Activated naive CD4-positive, alpha-beta T cell treated with anti-CD3 and anti-CD28 coated beads, Interleukin-2, amount 10 ng/mL, durations not matched to agents 7 days and 5 days (primary cell): ENCODE measurements at regions of chr3 and their contacts with region 1.

Region 1: DNA sequence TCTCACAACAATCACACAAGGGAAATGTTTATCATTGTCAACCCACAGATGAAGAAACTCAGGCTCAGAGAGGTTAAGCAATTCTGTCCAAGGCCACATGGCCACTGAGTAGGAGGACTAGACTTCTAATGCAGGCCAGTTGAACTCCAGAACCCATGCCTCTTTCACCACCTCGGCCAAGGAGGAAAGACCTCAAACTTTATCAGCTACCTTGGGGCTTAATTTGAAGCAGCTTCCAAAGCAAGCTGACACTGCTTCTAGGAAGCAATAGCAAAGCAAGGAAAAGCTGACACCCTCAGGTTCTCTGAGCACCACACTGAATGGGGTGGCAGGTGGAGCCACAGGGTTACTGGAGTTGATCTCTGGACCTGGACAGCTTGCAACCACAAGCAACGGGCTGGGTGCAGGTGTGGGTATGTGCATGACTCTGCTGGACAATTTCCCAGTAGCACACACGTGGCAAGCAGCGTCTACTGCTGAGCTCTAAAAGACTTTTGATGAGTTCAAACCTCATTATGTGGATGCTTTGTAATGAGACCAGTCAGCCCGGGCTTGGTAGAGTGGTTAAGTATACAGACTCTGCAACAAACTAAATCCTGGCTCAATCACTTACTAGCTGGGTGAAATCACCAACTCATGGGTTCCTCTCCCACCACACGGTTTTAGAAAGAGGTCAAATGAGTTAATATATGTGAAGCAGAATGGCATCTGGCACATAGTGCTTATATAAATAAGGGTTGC is 23.1 kb downstream of the CCNL1 start:
- DNase-seq: no peak
- H3K4me3 Mint-ChIP-seq: no peak overlapping the region
- H3K27ac Mint-ChIP-seq: peak overlapping the region; percentile 76
- H3K4me1 Mint-ChIP-seq: peaks cover 63% of the 10 kb centered on the region
- H3K27me3 Mint-ChIP-seq: no peaks in the 10 kb centered on the region

Region 2: GRCh38 chr3:156044634-156044975 is 1092.2 kb before region 1 on chr3:
- CTCF ChIA-PET with region 1: interaction called, 14 read pairs
- DNase-seq: no peak
- H3K4me3 Mint-ChIP-seq: no peak overlapping the region
- H3K27ac Mint-ChIP-seq: no peak overlapping the region
- H3K4me1 Mint-ChIP-seq: no peaks in the 10 kb centered on the region
- H3K27me3 Mint-ChIP-seq: peaks cover 16% of the 10 kb centered on the region

Region 3: GRCh38 chr3:156509189-156510174 is 627.3 kb before region 1 on chr3:
- CTCF ChIA-PET with region 1: interaction called, 19 read pairs
- DNase-seq: no peak
- H3K4me3 Mint-ChIP-seq: no peak overlapping the region
- H3K27ac Mint-ChIP-seq: no peak overlapping the region
- H3K4me1 Mint-ChIP-seq: peaks cover 19% of the 10 kb centered on the region
- H3K27me3 Mint-ChIP-seq: peaks cover 25% of the 10 kb centered on the region

Region 4: DNA sequence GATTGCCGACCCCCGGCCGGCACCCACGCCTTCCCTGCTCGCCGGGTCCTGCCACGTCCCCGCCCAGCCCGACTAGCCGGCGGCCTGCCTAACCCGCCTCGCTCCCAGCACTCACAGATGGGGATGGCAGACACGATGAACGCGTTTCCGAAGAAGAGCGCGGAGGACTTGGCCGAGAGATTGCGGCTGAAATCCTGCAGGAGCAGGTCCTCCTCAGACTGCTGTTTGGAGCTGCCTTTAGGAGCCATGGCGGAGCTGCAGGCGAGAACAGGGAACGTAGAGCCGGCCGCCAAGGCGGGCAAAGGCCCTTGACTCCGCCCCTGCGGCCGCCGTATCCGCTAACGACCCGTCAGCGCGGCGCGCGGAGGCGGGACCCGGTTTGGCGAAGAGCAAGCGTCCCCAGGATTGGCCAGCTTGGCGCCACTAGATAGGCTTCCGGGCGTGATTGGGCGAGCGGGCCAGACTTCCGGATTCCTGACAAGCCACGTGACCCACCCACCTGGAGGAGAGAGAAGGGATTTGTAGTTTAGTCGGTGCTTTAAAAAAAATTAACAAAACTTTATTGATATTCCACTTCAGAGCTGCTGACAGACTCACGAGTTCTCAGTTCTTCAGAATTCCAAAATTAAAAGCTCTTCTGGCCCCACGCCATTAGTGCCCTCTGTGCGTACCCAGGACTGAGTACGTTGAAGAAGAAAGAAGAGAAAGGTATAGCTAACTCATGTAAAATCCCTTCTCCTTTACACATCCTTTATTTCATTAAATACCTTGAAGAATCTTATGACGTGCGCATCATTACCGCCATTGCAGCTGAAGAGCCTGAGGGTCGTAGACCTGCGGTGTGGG is 581.8 kb before region 1 on chr3 and contains the start of gene SSR3:
- CTCF ChIA-PET with region 1: interaction called, 11 read pairs
- DNase-seq: peak; percentile 99
- H3K4me3 Mint-ChIP-seq: peak within 1 kb of the TSS; percentile 93
- H3K27ac Mint-ChIP-seq: peak within 1 kb of the TSS; percentile 84
- H3K4me1 Mint-ChIP-seq: peaks cover 49% of the 10 kb centered on the region
- H3K27me3 Mint-ChIP-seq: peaks cover 6% of the 10 kb centered on the region

Region 5: GRCh38 chr3:157081681-157082210 is 55.1 kb before region 1 on chr3:
- CTCF ChIA-PET with region 1: interaction called, 66 read pairs
- DNase-seq: peak; percentile 87
- H3K4me3 Mint-ChIP-seq: no peak overlapping the region
- H3K27ac Mint-ChIP-seq: no peak overlapping the region
- H3K4me1 Mint-ChIP-seq: peaks cover 42% of the 10 kb centered on the region
- H3K27me3 Mint-ChIP-seq: peaks cover 4% of the 10 kb centered on the region

Region 6: GRCh38 chr3:157148196-157148889 is 11.5 kb after region 1 on chr3:
- CTCF ChIA-PET with region 1: interaction called, 17 read pairs
- DNase-seq: no peak
- H3K4me3 Mint-ChIP-seq: no peak overlapping the region
- H3K27ac Mint-ChIP-seq: no peak overlapping the region
- H3K4me1 Mint-ChIP-seq: peaks cover 43% of the 10 kb centered on the region
- H3K27me3 Mint-ChIP-seq: no peaks in the 10 kb centered on the region